Heart left ventricle (tissue), 16 donors: ENCODE measurements at regions of chr16 and their contacts with region 1.

Region 1: DNA sequence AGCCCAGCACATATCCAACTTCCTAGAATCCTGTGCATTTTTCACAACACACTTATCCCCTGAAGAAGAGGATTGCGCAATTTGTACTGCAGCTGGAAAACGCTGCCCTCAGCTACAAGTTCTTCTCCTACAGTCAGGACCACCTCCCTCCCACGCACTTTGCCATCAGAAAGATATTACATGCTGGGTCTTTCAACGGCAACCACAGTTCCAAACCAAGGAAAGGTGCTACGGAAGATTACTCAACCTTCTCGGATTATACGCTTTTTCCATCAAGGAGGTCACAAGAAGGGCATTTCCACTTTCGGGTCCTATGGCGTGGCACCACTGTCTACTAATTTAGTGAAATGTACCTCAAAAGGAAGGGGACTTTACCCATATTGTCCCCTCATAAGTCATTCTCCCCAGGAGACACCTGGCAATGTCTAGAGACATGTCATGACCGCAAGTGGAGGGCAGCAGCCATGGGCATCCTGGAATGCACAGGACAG is 35.2 kb downstream of the USP7 start:
- DNase-seq: no peak
- ATAC-seq: peak in 3 of 4 donors; percentile 43 to 56 (median 45)
- H3K4me3 ChIP-seq: no peak overlapping the region
- H3K27ac ChIP-seq: no peak overlapping the region
- H3K4me1 ChIP-seq: peaks cover 0 to 37% (median 18%) of the 10 kb centered on the region in 12 donors
- H3K27me3 ChIP-seq: no peaks in the 10 kb centered on the region
- CTCF ChIP-seq: no peak
- POLR2A ChIP-seq: no peak

Region 2: GRCh38 chr16:8850279-8850885 is 78.1 kb before region 1 on chr16:
- intact Hi-C with region 1: no loop called
- DNase-seq: peak in 4 of 5 donors; percentile 57 to 77 (median 64)
- ATAC-seq: peak; percentile 34 to 85 (median 79)
- H3K4me3 ChIP-seq: no peak overlapping the region
- H3K27ac ChIP-seq: peak overlapping the region in 11 of 12 donors; percentile 50 to 73 (median 60)
- H3K4me1 ChIP-seq: peaks cover 0 to 33% (median 19%) of the 10 kb centered on the region in 12 donors
- H3K27me3 ChIP-seq: no peaks in the 10 kb centered on the region
- CTCF ChIP-seq: no peak
- POLR2A ChIP-seq: no peak

Region 3: DNA sequence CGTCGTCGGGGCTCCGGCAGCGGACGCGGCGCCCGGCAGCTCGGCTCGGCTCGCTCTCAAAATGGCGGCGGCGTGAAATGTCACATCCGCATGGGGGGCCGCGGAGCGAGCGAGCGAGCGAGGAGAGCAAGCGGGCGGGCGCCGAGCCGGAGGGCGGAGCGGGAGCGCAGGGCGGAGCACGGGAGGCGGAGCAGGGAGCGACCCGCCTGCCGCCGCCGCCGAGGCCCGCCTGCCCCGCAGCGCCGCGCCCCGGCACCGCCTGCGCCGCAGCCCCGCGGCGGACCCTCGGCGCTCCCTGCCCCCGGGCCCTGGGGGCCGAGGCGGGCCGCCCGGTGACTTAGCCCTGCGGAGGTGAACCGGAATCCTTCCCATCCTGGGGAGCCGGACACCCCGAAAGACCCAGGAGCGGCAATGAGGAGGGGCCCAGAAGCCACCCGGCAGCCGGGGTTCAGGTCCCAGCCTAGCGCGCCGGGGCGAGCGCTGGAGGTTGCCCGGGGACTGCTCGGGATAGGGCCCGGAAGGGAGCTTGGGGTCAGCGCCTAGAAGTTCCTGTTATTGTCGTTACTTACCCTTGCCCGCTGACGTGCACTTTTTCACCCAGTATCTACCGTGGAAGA is 35.4 kb after region 1 on chr16 and contains the start of gene USP7:
- intact Hi-C with region 1: loop called in 2 of 10 experiments (anchors 5 kb)
- DNase-seq: peak; percentile 94 to 97 (median 95)
- ATAC-seq: peak; percentile 85 to 97 (median 96)
- H3K4me3 ChIP-seq: peak within 1 kb of the TSS; percentile 63 to 95 (median 80)
- H3K27ac ChIP-seq: peak within 1 kb of the TSS; percentile 33 to 93 (median 82)
- H3K4me1 ChIP-seq: peaks cover 0 to 49% (median 37%) of the 10 kb centered on the region in 12 donors
- H3K27me3 ChIP-seq: no peaks in the 10 kb centered on the region
- CTCF ChIP-seq: no peak
- POLR2A ChIP-seq: no peak
- total RNA-seq, gene USP7: 49.5 to 86.5 (median 68.1) TPM